ENCODE measurements at regions of chr6 and their contacts with region 1.

Region 1: GRCh38 chr6:2791124-2791974 is 26.2 kb downstream of the WRNIP1 start:
- DNase-seq: peak; percentile 75
- ATAC-seq: peak; percentile 89
- H3K4me3 ChIP-seq: no peak overlapping the region
- H3K27ac ChIP-seq: peak overlapping the region; percentile 14; the same call in 1 of the 2 replicates
- H3K4me1 ChIP-seq: peaks cover 13 to 61% of the 10 kb centered on the region in 2 experiments; a peak in 3 of 4 replicates
- H3K27me3 ChIP-seq: no peaks in the 10 kb centered on the region
- CTCF ChIP-seq: peak; percentile 82 to 91 (median 86)
- POLR2A ChIP-seq: no peak
- RAD21 ChIP-seq: peak; percentile 99

Region 2: DNA sequence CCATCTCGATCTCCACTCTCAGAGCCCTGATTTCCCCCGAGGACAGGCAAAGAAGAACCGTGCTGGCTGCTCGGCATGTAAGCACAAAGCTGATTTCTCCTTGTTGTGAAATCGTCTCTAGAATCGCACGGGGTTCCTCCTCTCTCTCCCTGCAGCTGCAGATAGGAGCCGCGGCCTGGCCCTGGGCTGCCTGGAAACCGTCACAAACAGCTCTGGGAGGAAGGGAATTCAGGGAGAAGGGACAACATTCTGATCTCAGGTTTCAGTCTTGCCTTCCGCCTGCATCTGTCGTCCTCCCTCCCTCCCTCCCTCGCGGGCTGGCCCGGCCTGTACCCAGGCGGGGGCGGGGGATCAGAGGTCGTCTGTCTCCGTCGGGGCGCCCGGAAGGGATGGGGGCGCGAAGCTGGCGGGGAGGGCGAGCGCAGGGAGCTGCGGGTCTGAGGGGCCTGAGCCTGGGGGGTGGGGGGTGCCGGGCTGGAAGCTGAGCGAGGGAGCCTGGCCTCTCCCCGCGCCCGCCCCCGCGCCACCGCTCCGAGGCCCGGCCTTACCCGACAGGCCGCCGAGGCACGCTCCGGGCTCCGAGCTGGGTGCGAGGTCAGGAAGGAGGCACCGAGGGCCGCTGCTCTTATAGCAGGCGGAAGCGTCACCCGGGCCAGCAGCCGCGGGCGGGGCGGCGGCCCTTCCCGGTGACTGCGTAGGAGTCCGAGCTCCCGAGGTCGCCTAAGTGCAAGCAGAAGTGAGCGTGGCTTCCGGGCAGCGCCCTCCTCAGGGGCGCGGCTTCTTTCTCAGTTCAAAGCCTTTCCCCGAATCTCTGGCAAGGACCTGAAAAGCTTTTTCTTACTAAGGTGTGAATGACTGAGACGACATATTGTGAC is 50.2 kb after region 1 on chr6 and contains the start of gene SERPINB1:
- CTCF ChIA-PET with region 1: interaction called, 38 read pairs
- POLR2A ChIA-PET with region 1: interaction called, 18 read pairs
- RAD21 ChIA-PET with region 1: interaction called, 6 to 9 read pairs
- intact Hi-C with region 1: loop called (anchors 1 kb)
- DNase-seq: peak; percentile 81
- ATAC-seq: peak; percentile 78
- H3K4me3 ChIP-seq: peak within 1 kb of the TSS; percentile 70 to 71
- H3K27ac ChIP-seq: peak within 1 kb of the TSS; percentile 64
- H3K4me1 ChIP-seq: peaks cover 54 to 77% of the 10 kb centered on the region in 2 experiments
- H3K27me3 ChIP-seq: no peaks in the 10 kb centered on the region
- CTCF ChIP-seq: no peak
- POLR2A ChIP-seq: peak; percentile 42
- RAD21 ChIP-seq: no peak
- total RNA-seq, gene SERPINB1: 73.2 TPM

Region 3: DNA sequence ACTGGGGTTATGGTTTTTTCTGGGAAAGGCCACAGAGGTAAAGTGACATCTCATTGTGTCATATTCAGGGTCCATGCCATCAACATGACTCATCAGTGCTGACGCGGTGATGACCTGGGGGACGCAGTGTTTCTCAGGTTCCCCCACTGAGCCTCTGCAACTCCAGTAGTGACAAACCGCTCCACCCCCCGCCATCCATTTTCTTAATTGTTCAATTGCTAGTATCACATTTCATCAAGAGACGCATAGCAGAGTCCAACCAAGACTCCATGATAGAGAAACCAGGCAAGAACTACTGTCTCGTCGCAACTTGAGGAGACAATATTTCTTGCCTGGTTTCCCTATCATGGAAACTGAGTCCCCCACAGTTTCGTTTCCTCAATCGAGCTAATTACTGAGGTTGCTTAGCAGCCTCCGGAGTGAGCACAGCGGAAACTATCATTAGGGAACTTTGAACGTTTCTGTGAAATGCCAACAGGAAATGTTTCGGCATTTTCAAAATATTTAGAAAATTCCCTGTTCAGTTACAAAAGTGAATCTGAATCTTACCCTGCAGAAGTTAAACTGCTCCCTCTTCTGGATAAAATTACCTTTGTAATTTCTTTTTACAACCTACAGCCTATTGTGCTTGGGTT is 62.5 kb after region 1 on chr6:
- CTCF ChIA-PET with region 1: interaction called, 12 read pairs
- POLR2A ChIA-PET with region 1: interaction called, 8 read pairs
- RAD21 ChIA-PET with region 1: interaction called, 3 read pairs
- intact Hi-C with region 1: loop called (anchors 1 kb)
- DNase-seq: peak; percentile 87
- ATAC-seq: peak; percentile 47
- H3K4me3 ChIP-seq: peak overlapping the region; percentile 23 to 53
- H3K27ac ChIP-seq: peak overlapping the region; percentile 76
- H3K4me1 ChIP-seq: peaks cover 44 to 88% of the 10 kb centered on the region in 2 experiments
- H3K27me3 ChIP-seq: no peaks in the 10 kb centered on the region
- CTCF ChIP-seq: peak in 2 of 3 experiments; percentile 26 to 40; a peak in 2 of 6 replicates
- POLR2A ChIP-seq: no peak
- RAD21 ChIP-seq: no peak

Region 4: GRCh38 chr6:2911171-2911570 is 119.8 kb after region 1 on chr6:
- CTCF ChIA-PET with region 1: interaction called, 12 read pairs
- POLR2A ChIA-PET with region 1: no interaction called
- RAD21 ChIA-PET with region 1: interaction called, 4 to 7 read pairs
- intact Hi-C with region 1: loop called (anchors 1 kb)
- DNase-seq: no peak
- ATAC-seq: no peak
- H3K4me3 ChIP-seq: no peak overlapping the region
- H3K27ac ChIP-seq: no peak overlapping the region
- H3K4me1 ChIP-seq: peaks cover 0 to 20% of the 10 kb centered on the region in 2 experiments; a peak in 2 of 4 replicates
- H3K27me3 ChIP-seq: no peaks in the 10 kb centered on the region
- CTCF ChIP-seq: no peak
- POLR2A ChIP-seq: no peak
- RAD21 ChIP-seq: no peak

Region 5: DNA sequence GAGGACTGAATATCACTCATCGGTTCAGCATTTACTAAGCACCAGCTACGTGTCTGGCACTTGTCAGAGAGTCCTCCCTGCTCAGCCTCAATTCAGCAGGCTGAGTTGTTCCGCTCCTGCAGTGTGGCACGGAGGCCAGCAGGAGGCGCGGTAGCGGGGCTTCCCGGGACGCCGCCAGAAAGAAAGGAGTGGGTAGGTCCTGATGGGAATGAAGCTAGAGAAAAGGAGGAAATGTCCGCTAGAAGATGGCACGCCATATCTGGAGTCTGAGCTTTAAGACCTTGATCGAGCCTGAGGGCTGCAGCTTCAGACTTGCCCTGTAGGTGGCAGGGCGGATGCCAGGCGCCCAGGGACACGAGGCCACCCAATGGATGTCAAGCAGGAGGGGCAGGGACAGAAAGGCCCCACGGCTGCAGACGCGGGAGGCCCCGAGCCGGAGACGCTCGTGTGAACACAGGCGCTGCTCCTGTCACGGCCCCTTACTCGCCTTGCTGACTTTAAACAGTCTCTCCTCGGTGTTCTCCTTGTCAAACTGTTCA is 161.3 kb after region 1 on chr6:
- CTCF ChIA-PET with region 1: interaction called, 17 read pairs
- POLR2A ChIA-PET with region 1: interaction called, 3 read pairs
- RAD21 ChIA-PET with region 1: interaction called in 1 of 2 experiments, 5 read pairs
- intact Hi-C with region 1: no loop called
- DNase-seq: peak; percentile 91
- ATAC-seq: peak; percentile 96
- H3K4me3 ChIP-seq: no peak overlapping the region
- H3K27ac ChIP-seq: peak overlapping the region; percentile 12; the same call in 1 of the 2 replicates
- H3K4me1 ChIP-seq: peaks cover 10 to 18% of the 10 kb centered on the region in 2 experiments
- H3K27me3 ChIP-seq: no peaks in the 10 kb centered on the region
- CTCF ChIP-seq: peak; percentile 99 to 100 (median 99)
- POLR2A ChIP-seq: no peak
- RAD21 ChIP-seq: peak; percentile 83

Region 6: GRCh38 chr6:3052481-3053230 is 261.3 kb after region 1 on chr6:
- CTCF ChIA-PET with region 1: interaction called, 5 read pairs
- POLR2A ChIA-PET with region 1: no interaction called
- RAD21 ChIA-PET with region 1: interaction called in 1 of 2 experiments, 4 read pairs
- intact Hi-C with region 1: loop called (anchors 5 kb)
- DNase-seq: no peak
- ATAC-seq: no peak
- H3K4me3 ChIP-seq: peak overlapping the region; percentile 57 to 63
- H3K27ac ChIP-seq: no peak overlapping the region
- H3K4me1 ChIP-seq: peaks cover 10 to 24% of the 10 kb centered on the region in 2 experiments; a peak in 2 of 4 replicates
- H3K27me3 ChIP-seq: no peaks in the 10 kb centered on the region
- CTCF ChIP-seq: no peak
- POLR2A ChIP-seq: no peak
- RAD21 ChIP-seq: no peak

Region 7: GRCh38 chr6:3825851-3826581 is 1034.7 kb after region 1 on chr6:
- CTCF ChIA-PET with region 1: no interaction called
- POLR2A ChIA-PET with region 1: no interaction called
- RAD21 ChIA-PET with region 1: no interaction called
- intact Hi-C with region 1: no loop called
- DNase-seq: peak; percentile 81
- ATAC-seq: peak; percentile 90
- H3K4me3 ChIP-seq: peak overlapping the region in 1 of 2 experiments; percentile 32; a peak in 2 of 4 replicates
- H3K27ac ChIP-seq: peak overlapping the region; percentile 75
- H3K4me1 ChIP-seq: peaks cover 15 to 30% of the 10 kb centered on the region in 2 experiments
- H3K27me3 ChIP-seq: no peaks in the 10 kb centered on the region
- CTCF ChIP-seq: no peak
- POLR2A ChIP-seq: no peak
- RAD21 ChIP-seq: peak; percentile 30; the same call in 1 of the 2 replicates